ENCODE measurements at regions of chr4 and their contacts with region 1.

Region 1: GRCh38 chr4:155759405-155760252 is 808 bp downstream of the GUCY1B1 start:
- DNase-seq: peak; percentile 29 to 33
- H3K4me3 ChIP-seq: peak overlapping the region; percentile 49 to 65 (median 54)
- H3K27ac ChIP-seq: peak overlapping the region; percentile 27 to 88 (median 80)
- H3K4me1 ChIP-seq: peaks cover 0 to 16% of the 10 kb centered on the region in 2 donors
- H3K27me3 ChIP-seq: no peaks in the 10 kb centered on the region
- CTCF ChIP-seq: no peak
- POLR2A ChIP-seq: no peak

Region 2: GRCh38 chr4:155667568-155668511 is 91.8 kb before region 1 on chr4:
- intact Hi-C with region 1: loop called (anchors 5 kb)
- DNase-seq: peak; percentile 12 to 38
- H3K4me3 ChIP-seq: peak overlapping the region; percentile 31 to 63 (median 59)
- H3K27ac ChIP-seq: peak overlapping the region; percentile 67 to 83 (median 74)
- H3K4me1 ChIP-seq: peaks cover 0 to 3% of the 10 kb centered on the region in 2 donors
- H3K27me3 ChIP-seq: no peaks in the 10 kb centered on the region
- CTCF ChIP-seq: no peak
- POLR2A ChIP-seq: no peak

Region 3: DNA sequence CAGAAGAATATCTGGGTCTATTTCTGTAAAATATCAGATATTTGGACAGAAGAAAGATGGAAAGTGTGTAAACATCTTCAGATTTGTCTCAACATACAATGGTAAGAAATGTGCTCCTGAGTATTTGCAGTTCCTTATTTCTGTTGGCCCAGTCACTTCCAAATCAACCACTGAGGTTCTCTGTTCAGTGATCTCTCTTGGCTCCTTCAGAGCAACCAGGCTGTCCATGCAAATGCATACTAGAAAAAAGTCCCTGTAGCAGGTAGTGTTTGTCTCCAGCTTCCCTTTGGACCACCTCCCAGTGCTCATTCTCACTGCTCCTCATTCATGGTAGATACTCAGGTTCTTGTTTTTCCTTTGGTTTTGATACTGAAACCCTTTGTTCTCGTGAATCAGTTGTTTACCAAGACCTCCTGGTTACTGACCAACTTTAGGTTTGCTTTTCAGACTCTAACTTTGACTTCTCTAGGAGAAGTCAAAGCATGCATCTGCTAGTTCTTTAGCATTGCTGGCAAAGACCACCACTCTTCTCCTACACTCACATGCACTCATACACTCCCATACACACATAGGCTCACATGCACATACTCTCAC is 77.7 kb after region 1 on chr4:
- intact Hi-C with region 1: no loop called
- DNase-seq: no peak
- H3K4me3 ChIP-seq: no peak overlapping the region
- H3K27ac ChIP-seq: no peak overlapping the region
- H3K4me1 ChIP-seq: no peaks in the 10 kb centered on the region
- H3K27me3 ChIP-seq: no peaks in the 10 kb centered on the region
- CTCF ChIP-seq: no peak
- POLR2A ChIP-seq: no peak